ENCODE measurements at regions of chr11 and their contacts with region 1.

Region 1: DNA sequence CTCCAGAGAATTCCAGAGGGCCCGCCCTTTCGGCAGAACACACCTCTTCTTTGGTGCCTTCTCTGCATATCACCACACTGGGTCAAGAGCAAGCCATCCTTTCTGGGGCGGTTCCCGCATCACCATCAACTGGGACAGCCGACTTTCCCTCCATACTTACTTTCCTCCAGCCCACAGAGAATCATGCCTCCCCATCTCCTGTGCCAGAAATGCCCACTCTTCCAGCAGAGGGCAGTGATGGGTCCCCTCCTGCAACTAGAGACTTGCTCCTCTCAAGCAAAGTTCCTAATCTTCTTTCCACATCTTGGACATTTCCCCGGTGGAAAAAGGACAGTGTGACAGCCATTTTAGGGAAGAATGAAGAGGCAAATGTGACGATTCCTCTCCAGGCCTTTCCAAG is 157.7 kb downstream of the C11orf91 start:
- DNase-seq: peak; percentile 38 to 46
- ATAC-seq: peak in 2 of 8 donors; percentile 38 to 68
- H3K4me3 ChIP-seq: no peak overlapping the region
- H3K27ac ChIP-seq: no peak overlapping the region
- H3K4me1 ChIP-seq: peaks cover 0 to 17% (median 0%) of the 10 kb centered on the region in 9 donors
- H3K27me3 ChIP-seq: no peaks in the 10 kb centered on the region
- CTCF ChIP-seq: peak; percentile 25 to 73 (median 61)

Region 2: DNA sequence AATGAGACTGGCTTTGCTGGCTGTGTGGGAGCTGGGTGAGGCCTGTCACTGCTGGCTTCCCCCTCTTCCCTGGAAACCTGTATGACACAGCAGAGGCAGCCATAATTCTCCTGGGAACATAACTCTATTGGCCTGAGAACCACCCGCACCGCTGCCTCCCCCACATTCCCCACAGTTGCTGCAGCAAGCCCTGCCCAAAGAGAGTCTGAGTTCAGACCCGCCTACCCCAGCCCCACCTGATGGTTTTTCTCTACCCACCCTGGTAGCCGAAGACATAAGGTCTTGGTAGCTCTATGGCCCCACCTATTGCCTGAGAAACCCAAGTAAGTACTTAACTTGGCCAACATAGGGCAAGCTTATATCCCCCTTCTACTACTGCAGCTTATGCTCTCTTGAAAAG is 17.1 kb before region 1 on chr11:
- intact Hi-C with region 1: no loop called
- DNase-seq: no peak
- ATAC-seq: no peak
- H3K4me3 ChIP-seq: no peak overlapping the region
- H3K27ac ChIP-seq: no peak overlapping the region
- H3K4me1 ChIP-seq: no peaks in the 10 kb centered on the region
- H3K27me3 ChIP-seq: no peaks in the 10 kb centered on the region
- CTCF ChIP-seq: no peak

Region 3: DNA sequence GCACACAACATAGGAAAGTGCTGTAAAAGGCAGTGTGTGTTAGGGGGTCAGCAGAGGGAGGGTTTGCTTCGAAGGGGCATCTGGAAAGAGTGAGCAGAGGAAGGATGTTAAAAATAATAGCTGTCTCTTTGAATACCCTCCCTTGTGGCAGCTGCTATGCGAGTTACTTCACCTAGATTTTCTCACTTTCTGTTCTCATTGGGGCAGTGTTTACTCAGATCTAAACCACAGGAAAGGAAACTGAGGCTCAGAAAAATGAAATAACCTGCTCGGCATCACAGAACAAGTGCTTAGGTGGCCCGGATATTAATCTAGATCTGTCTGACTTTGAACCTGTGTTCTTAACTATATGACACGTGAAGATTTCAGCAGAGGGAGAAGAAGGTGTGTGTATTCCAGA is 32.4 kb after region 1 on chr11:
- intact Hi-C with region 1: no loop called
- DNase-seq: no peak
- ATAC-seq: no peak
- H3K4me3 ChIP-seq: no peak overlapping the region
- H3K27ac ChIP-seq: no peak overlapping the region
- H3K4me1 ChIP-seq: no peaks in the 10 kb centered on the region
- H3K27me3 ChIP-seq: peaks cover 0 to 10% (median 0%) of the 10 kb centered on the region in 7 donors
- CTCF ChIP-seq: no peak

Region 4: GRCh38 chr11:33682446-33682845 is 139.5 kb after region 1 on chr11:
- intact Hi-C with region 1: loop called in 9 of 10 experiments (anchors 2 to 10 kb)
- DNase-seq: no peak
- ATAC-seq: no peak
- H3K4me3 ChIP-seq: no peak overlapping the region
- H3K27ac ChIP-seq: no peak overlapping the region
- H3K4me1 ChIP-seq: no peaks in the 10 kb centered on the region
- H3K27me3 ChIP-seq: peaks cover 0 to 6% (median 0%) of the 10 kb centered on the region in 7 donors
- CTCF ChIP-seq: peak in 1 of 9 donors; percentile 16

Region 5: DNA sequence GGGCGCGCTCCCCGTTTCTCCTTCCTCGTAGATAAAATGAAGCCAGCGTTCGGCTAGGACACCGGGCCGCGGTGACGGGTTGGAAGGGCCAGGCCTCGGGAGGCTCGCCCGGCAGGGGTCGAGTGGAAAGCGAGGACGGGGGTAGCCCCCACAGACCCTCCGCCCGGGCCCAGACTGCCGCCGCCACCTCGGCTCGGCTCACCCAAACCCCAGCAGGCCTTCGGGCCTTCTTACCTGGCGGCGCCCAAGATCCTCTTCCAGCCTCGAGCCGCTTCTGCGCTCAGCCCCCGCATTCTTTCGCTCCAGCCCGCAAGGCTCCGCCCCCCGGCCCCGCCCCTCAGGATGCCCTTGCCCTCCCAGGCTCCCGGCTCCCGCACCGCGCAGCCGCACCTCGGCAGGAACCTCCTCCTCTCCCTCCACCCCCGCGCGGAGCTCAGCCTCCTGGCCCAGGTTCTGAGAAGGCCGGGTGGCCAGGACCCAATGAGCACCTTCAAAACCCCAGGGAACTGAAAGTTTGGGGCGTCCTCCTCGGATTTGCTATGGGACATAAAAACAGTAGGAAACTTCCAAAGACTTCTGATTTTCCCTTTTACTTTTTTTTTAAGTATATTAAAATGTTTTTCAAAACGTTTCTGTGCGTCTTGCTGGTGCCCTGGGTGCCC is 193.4 kb after region 1 on chr11 and contains the start of gene CD59:
- intact Hi-C with region 1: loop called in 4 of 10 experiments (anchors 5 to 10 kb)
- DNase-seq: peak; percentile 98
- ATAC-seq: peak; percentile 96 to 97 (median 96)
- H3K4me3 ChIP-seq: peak within 1 kb of the TSS; percentile 66 to 100 (median 84)
- H3K27ac ChIP-seq: peak within 1 kb of the TSS; percentile 94 to 100 (median 96)
- H3K4me1 ChIP-seq: peaks cover 9 to 52% (median 45%) of the 10 kb centered on the region in 9 donors
- H3K27me3 ChIP-seq: no peaks in the 10 kb centered on the region
- CTCF ChIP-seq: no peak
- total RNA-seq, gene CD59: 676 to 1,261 (median 764) TPM

Region 6: DNA sequence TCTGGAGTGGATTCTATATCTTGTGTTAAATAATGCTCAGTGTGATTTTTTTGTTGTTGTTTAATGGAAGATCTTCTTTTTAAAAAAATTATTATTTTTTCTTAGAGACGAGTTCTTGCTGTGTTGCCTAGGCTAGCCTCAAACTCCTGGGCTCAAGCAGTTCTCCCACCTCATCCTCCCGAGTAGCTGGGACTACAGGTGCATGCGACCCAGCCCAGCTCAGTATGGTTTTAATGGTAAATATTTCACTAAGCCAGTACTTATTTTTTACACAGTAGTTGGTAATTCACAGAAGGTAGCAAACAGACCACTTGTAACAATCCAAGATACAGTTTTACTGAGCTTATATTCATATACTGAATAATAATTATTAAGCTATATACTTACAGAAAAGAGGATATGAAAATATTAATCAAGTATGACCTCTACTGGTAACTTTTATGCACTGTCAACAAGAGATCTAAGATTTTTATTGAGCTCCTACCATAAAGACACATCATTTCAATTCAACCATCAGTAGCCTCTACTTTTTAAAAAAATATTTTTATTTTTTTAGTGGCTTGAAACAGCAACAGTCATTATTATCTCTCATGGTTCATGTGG is 199.4 kb after region 1 on chr11:
- intact Hi-C with region 1: loop called in 7 of 10 experiments (anchors 2 to 10 kb)
- DNase-seq: no peak
- ATAC-seq: peak in 7 of 8 donors; percentile 13 to 60 (median 46)
- H3K4me3 ChIP-seq: no peak overlapping the region
- H3K27ac ChIP-seq: peak overlapping the region in 4 of 10 donors; percentile 4 to 29 (median 26)
- H3K4me1 ChIP-seq: peaks cover 0 to 43% (median 11%) of the 10 kb centered on the region in 9 donors
- H3K27me3 ChIP-seq: no peaks in the 10 kb centered on the region
- CTCF ChIP-seq: peak; percentile 34 to 77 (median 67)

Region 7: DNA sequence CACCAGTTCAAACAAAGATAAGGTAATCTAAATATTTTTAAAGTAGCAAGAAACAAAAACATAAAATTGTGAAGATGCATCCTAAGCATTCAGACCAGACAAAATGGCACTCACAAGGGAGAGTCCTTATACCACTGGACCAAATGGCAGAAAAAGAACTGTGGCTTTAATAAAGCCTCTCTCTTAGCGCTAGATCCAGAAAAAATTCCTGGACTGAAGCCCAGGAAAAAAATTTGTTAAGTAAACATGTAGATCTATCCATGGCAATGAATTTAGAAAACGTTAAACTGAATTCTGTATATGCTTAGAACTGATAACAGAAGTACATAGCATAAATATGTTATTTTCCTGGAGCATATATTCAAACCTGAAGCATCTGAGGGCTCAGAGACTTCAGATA is 205.1 kb after region 1 on chr11:
- intact Hi-C with region 1: loop called in 6 of 10 experiments (anchors 2 to 10 kb)
- DNase-seq: no peak
- ATAC-seq: peak in 2 of 8 donors; percentile 41 to 53
- H3K4me3 ChIP-seq: no peak overlapping the region
- H3K27ac ChIP-seq: peak overlapping the region in 2 of 10 donors; percentile 41 to 57
- H3K4me1 ChIP-seq: peaks cover 0 to 47% (median 6%) of the 10 kb centered on the region in 9 donors
- H3K27me3 ChIP-seq: no peaks in the 10 kb centered on the region
- CTCF ChIP-seq: no peak

Region 8: DNA sequence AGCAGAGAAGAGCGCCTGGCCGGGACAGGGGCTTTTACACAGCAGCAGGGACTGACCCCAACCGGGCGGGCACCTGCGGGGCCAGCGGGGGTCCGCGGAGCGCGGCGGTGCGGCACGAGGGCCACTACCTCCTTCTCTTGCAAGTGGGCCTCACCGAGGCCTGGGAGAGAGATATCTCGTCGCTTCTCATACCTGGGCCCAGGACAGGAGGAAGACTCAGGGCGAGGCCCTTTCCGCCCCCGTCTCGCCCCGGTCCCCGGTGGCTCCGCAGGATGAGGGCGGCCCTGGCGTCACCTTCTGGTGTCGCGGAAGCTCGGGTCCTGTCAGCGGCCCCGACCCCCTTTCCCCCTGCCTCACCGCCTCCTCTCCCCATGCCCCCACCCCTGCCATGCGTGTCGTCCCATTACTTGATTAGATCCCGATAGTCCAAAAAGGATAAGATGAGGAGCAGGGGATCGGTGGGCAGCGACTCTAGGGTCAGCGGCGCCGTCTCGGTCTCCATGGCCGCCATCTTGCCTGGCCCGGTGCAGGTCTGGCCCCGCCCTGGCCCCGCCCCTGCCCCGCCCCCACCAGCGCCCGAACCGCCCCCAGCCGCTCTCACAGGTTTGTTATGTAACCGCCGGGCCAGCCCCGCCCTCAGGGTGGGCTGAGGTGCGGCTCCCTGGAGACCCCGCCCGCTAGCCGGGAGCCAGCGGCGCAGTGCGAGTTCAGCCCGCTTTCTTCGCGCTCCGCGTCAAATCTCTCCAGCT is 231.2 kb after region 1 on chr11 and contains the start of gene FBXO3:
- intact Hi-C with region 1: no loop called
- DNase-seq: peak; percentile 86 to 88
- ATAC-seq: peak; percentile 95 to 97 (median 96)
- H3K4me3 ChIP-seq: peak within 1 kb of the TSS; percentile 59 to 98 (median 94)
- H3K27ac ChIP-seq: peak within 1 kb of the TSS; percentile 78 to 95 (median 88)
- H3K4me1 ChIP-seq: peaks cover 0 to 63% (median 40%) of the 10 kb centered on the region in 9 donors
- H3K27me3 ChIP-seq: peaks cover 0 to 14% (median 0%) of the 10 kb centered on the region in 7 donors
- CTCF ChIP-seq: no peak
- total RNA-seq, gene FBXO3: 43.4 to 72.5 (median 59.5) TPM

Measured in heart right ventricle (tissue), 16 donors.